Common myeloid progenitor, CD34-positive (primary cell): ENCODE measurements at regions of chr7 and their contacts with region 1.

Region 1: GRCh38 chr7:2529161-2530070 is 9.8 kb downstream of the LFNG start:
- DNase-seq: peak; percentile 88 to 97 (median 96)
- H3K4me3 ChIP-seq: peak overlapping the region in 5 of 7 experiments; percentile 27 to 66 (median 50)
- H3K27ac ChIP-seq: peak overlapping the region; percentile 68 to 87
- H3K4me1 ChIP-seq: peaks cover 6 to 71% (median 66%) of the 10 kb centered on the region in 4 experiments
- H3K27me3 ChIP-seq: no peaks in the 10 kb centered on the region

Region 2: GRCh38 chr7:2555121-2556052 is 26.0 kb after region 1 on chr7 and contains the start of gene BRAT1:
- CTCF ChIA-PET with region 1: interaction called, 4 read pairs
- POLR2A ChIA-PET with region 1: interaction called, 10 read pairs
- DNase-seq: peak; percentile 91 to 96 (median 96)
- H3K4me3 ChIP-seq: peak within 1 kb of the TSS; percentile 62 to 85 (median 80)
- H3K27ac ChIP-seq: peak within 1 kb of the TSS; percentile 99
- H3K4me1 ChIP-seq: peaks cover 0 to 41% (median 34%) of the 10 kb centered on the region in 4 experiments
- H3K27me3 ChIP-seq: no peaks in the 10 kb centered on the region

Region 3: DNA sequence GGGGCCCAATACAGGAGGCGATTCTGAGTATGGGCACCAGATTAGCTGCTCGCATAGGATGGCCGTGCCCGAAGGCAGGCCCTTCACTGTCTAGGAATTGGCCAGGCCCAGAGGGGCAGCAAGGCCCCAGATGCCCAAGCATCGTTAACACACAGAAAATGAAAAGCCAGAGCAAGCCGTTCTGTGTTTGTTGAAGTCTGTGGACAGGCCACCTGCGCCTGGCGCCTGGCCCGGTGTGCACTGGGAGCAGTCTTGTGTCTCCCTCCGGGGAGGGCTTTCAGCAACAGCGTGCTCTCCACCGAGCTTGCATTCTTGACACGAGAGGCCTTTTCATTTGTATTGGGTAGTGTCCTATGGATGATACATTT is 67.8 kb after region 1 on chr7:
- CTCF ChIA-PET with region 1: no interaction called
- POLR2A ChIA-PET with region 1: no interaction called
- DNase-seq: no peak
- H3K4me3 ChIP-seq: no peak overlapping the region
- H3K27ac ChIP-seq: no peak overlapping the region
- H3K4me1 ChIP-seq: no peaks in the 10 kb centered on the region
- H3K27me3 ChIP-seq: no peaks in the 10 kb centered on the region